IMR-90 (cell line): ENCODE measurements at regions of chr4 and their contacts with region 1.

Region 1: DNA sequence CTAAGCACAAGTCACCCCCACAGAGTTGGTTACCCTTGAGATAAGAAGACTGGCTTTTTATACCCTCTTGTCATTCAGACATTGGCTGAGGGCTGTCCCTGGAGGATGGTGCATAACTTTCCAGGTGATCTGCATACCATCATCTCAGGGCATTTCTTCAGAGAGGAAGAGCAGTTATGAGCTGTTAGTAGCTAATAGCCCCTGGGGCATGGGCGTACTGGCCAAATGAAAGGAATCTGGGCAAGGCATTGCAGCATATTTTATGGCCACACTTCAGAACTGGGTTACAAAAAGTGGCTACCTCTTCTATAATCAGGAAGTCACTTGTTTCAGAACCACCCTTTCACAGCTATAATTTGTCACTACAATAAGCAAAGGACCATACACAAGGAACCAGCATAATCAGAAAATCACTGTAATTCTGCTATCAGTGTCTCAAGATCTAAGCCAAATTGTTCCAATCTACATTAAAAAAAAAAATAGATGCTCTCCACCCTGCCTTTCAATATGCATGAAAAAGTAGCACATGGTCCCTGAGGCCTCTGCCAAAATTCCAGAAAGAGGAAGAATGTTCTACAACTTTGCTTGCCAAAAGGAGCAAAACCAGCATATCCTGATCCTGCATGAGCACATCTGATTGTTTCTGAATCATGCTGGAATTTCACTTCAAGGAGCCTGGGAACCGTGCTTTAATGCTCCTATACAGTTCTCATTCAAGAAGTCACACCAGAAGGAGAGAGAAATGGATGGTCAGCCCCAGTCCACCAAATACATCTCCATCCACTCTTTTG is 92.0 kb downstream of the TMEM144 start:
- DNase-seq: peak; percentile 80
- ATAC-seq: peak; percentile 57
- H3K4me3 ChIP-seq: no peak overlapping the region
- H3K27ac ChIP-seq: no peak overlapping the region
- H3K4me1 ChIP-seq: peaks cover 2% of the 10 kb centered on the region; the same call in 1 of the 2 replicates
- H3K27me3 ChIP-seq: no peaks in the 10 kb centered on the region
- CTCF ChIP-seq: no peak
- POLR2A ChIP-seq: no peak
- RAD21 ChIP-seq: no peak

Region 2: GRCh38 chr4:156654410-156654809 is 1647.9 kb before region 1 on chr4:
- CTCF ChIA-PET with region 1: no interaction called
- POLR2A ChIA-PET with region 1: no interaction called
- dilution Hi-C with region 1: no loop called
- in situ Hi-C with region 1: no loop called
- intact Hi-C with region 1: loop called (anchors 10 kb)
- DNase-seq: no peak
- ATAC-seq: no peak
- H3K4me3 ChIP-seq: no peak overlapping the region
- H3K27ac ChIP-seq: no peak overlapping the region
- H3K4me1 ChIP-seq: no peaks in the 10 kb centered on the region
- H3K27me3 ChIP-seq: no peaks in the 10 kb centered on the region
- CTCF ChIP-seq: no peak
- POLR2A ChIP-seq: no peak
- RAD21 ChIP-seq: no peak

Region 3: GRCh38 chr4:158314756-158315487 is 12.7 kb after region 1 on chr4:
- CTCF ChIA-PET with region 1: no interaction called
- POLR2A ChIA-PET with region 1: no interaction called
- dilution Hi-C with region 1: no loop called
- in situ Hi-C with region 1: no loop called
- intact Hi-C with region 1: loop called (anchors 1 kb)
- DNase-seq: peak; percentile 98
- ATAC-seq: peak; percentile 73
- H3K4me3 ChIP-seq: no peak overlapping the region
- H3K27ac ChIP-seq: peak overlapping the region; percentile 98
- H3K4me1 ChIP-seq: peaks cover 17% of the 10 kb centered on the region
- H3K27me3 ChIP-seq: no peaks in the 10 kb centered on the region
- CTCF ChIP-seq: no peak
- POLR2A ChIP-seq: no peak
- RAD21 ChIP-seq: no peak

Region 4: DNA sequence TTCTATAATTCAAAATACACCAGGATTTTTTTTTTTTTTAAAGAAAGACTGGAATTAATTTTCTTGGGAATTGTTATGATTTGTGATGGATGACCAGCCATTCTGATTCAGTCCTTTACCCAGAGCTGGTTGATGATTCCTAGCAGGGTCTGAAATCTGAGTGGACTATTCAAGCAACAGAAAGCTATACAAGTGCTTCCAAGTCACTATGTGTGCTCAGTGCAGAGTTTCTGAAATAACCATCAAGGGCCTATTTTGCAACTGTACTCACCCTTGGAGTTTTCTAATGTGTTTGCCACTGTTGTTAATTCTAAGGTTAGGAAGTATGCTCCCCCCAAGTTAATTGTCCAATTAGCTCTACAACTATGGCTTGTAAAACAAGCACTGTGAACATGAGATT is 663.0 kb after region 1 on chr4:
- CTCF ChIA-PET with region 1: no interaction called
- POLR2A ChIA-PET with region 1: no interaction called
- dilution Hi-C with region 1: no loop called
- in situ Hi-C with region 1: no loop called
- intact Hi-C with region 1: no loop called
- DNase-seq: no peak
- ATAC-seq: no peak
- H3K4me3 ChIP-seq: no peak overlapping the region
- H3K27ac ChIP-seq: no peak overlapping the region
- H3K4me1 ChIP-seq: 0 out of 2 replicates have a peak, but pooled peaks cover 2% of the 10 kb centered on the region
- H3K27me3 ChIP-seq: 0 out of 2 replicates have a peak, but pooled peaks cover 2% of the 10 kb centered on the region
- CTCF ChIP-seq: no peak
- POLR2A ChIP-seq: no peak
- RAD21 ChIP-seq: no peak